ENCODE measurements at regions of chr2 and their contacts with region 1.

Region 1: GRCh38 chr2:21175895-21176646 is 52.3 kb downstream of the TDRD15 start:
- DNase-seq: peak in 1 of 2 experiments; percentile 25
- H3K4me3 ChIP-seq: no peak overlapping the region
- H3K4me3 Mint-ChIP-seq: peak overlapping the region; percentile 6
- H3K27ac Mint-ChIP-seq: no peak overlapping the region
- H3K4me1 ChIP-seq: peaks cover 8% of the 10 kb centered on the region
- H3K4me1 Mint-ChIP-seq: peaks cover 15% of the 10 kb centered on the region
- H3K27me3 ChIP-seq: no peaks in the 10 kb centered on the region
- H3K27me3 Mint-ChIP-seq: no peaks in the 10 kb centered on the region
- CTCF ChIP-seq: peak; percentile 12 to 66

Region 2: DNA sequence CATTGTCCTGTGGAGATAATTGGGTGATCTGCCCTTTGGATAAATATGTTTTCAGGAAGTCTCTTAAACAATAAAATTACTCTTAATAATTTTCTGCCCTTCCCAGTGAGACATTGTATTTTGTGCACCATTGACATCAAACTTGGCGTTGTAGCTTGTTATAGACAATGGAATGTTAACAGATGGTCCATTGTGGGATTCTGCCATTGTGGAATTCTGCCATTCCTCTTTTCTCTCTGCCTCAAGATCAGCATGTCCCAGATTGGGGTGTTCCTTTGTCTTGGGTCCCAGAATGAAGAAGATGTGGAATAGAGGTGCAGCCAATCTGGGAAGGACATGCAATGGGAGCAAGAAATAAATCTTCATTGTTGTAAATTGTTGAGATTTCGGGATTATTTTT is 338.1 kb before region 1 on chr2:
- CTCF ChIA-PET with region 1: no interaction called
- POLR2A ChIA-PET with region 1: no interaction called
- intact Hi-C with region 1: no loop called
- DNase-seq: no peak
- H3K4me3 ChIP-seq: no peak overlapping the region
- H3K4me3 Mint-ChIP-seq: no peak overlapping the region
- H3K27ac Mint-ChIP-seq: no peak overlapping the region
- H3K4me1 ChIP-seq: no peaks in the 10 kb centered on the region
- H3K4me1 Mint-ChIP-seq: no peaks in the 10 kb centered on the region
- H3K27me3 ChIP-seq: no peaks in the 10 kb centered on the region
- H3K27me3 Mint-ChIP-seq: peaks cover 19% of the 10 kb centered on the region
- CTCF ChIP-seq: no peak

Region 3: GRCh38 chr2:21203976-21204375 is 27.9 kb after region 1 on chr2:
- CTCF ChIA-PET with region 1: no interaction called
- POLR2A ChIA-PET with region 1: no interaction called
- intact Hi-C with region 1: no loop called
- DNase-seq: no peak
- H3K4me3 ChIP-seq: no peak overlapping the region
- H3K4me3 Mint-ChIP-seq: no peak overlapping the region
- H3K27ac Mint-ChIP-seq: no peak overlapping the region
- H3K4me1 ChIP-seq: no peaks in the 10 kb centered on the region
- H3K4me1 Mint-ChIP-seq: no peaks in the 10 kb centered on the region
- H3K27me3 ChIP-seq: no peaks in the 10 kb centered on the region
- H3K27me3 Mint-ChIP-seq: no peaks in the 10 kb centered on the region
- CTCF ChIP-seq: no peak

Region 4: DNA sequence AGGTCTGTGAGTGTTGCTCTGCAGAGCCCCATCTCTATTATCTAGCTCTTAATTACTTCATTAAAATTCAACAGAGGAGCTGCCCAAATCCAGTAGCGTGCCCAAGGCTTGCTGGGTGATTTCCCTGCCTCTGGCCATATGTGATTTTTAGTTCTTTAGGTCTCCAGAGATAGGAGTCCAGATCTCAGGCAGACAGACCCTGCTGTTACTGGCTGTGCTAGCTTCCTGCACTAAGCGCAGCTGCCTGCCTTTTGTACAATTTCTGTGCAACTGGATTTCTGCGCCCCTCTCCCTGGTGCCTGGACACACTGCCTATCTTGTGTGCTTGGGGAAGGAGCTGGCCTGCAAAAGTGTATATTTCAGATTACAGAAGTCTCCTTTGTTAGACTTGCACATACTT is 84.2 kb after region 1 on chr2:
- CTCF ChIA-PET with region 1: no interaction called
- POLR2A ChIA-PET with region 1: no interaction called
- intact Hi-C with region 1: no loop called
- DNase-seq: no peak
- H3K4me3 ChIP-seq: no peak overlapping the region
- H3K4me3 Mint-ChIP-seq: no peak overlapping the region
- H3K27ac Mint-ChIP-seq: no peak overlapping the region
- H3K4me1 ChIP-seq: peaks cover 15% of the 10 kb centered on the region
- H3K4me1 Mint-ChIP-seq: peaks cover 30% of the 10 kb centered on the region
- H3K27me3 ChIP-seq: no peaks in the 10 kb centered on the region
- H3K27me3 Mint-ChIP-seq: no peaks in the 10 kb centered on the region
- CTCF ChIP-seq: no peak

Region 5: DNA sequence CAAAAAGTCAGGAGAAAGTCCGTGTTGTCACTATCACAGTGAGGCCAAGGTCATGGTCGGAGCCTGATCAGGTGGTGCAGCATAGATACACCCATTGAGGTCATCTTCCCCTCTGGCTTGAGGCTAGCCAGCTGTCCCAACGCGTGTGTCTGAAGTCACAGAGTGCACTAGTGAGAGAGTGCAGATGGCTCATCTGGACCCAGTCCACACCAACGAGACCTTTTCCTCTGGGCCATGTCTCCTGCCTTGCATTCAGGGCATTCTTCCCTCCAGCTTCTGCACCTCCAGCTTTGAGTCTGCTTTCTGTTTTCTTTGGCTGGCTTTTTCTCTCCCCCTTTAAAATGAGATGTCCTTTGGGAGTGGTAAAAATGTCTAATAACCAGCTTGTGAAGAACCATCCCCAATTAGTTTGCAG is 94.6 kb after region 1 on chr2:
- CTCF ChIA-PET with region 1: interaction called, 3 read pairs
- POLR2A ChIA-PET with region 1: no interaction called
- intact Hi-C with region 1: loop called (anchors 2 kb)
- DNase-seq: peak; percentile 25 to 44
- H3K4me3 ChIP-seq: no peak overlapping the region
- H3K4me3 Mint-ChIP-seq: peak overlapping the region; percentile 44
- H3K27ac Mint-ChIP-seq: peak overlapping the region; percentile 92
- H3K4me1 ChIP-seq: peaks cover 53% of the 10 kb centered on the region
- H3K4me1 Mint-ChIP-seq: peaks cover 63% of the 10 kb centered on the region
- H3K27me3 ChIP-seq: no peaks in the 10 kb centered on the region
- H3K27me3 Mint-ChIP-seq: no peaks in the 10 kb centered on the region
- CTCF ChIP-seq: no peak

Region 6: DNA sequence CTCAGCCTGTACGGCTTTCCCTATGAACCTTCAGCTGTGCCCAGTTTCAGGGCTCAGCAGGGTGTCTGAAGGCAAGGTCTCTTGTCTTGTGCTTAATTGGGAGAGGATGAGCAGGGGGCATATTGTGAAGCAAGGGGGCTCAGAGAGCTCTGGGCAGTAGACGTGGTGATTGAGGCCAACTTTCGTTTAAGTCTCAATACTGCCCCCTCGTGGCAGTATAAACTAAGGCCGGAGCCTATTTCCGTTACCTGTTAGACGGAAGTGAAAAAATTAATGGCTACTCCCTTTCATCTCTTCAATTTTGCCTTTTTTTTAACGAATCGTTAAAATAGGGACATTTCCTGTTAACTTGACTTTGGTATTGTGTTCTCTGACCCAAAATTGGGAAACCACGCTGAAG is 141.1 kb after region 1 on chr2:
- CTCF ChIA-PET with region 1: interaction called, 21 read pairs
- POLR2A ChIA-PET with region 1: no interaction called
- intact Hi-C with region 1: loop called (anchors 1 kb)
- DNase-seq: peak; percentile 48 to 70
- H3K4me3 ChIP-seq: no peak overlapping the region
- H3K4me3 Mint-ChIP-seq: no peak overlapping the region
- H3K27ac Mint-ChIP-seq: peak overlapping the region; percentile 57
- H3K4me1 ChIP-seq: peaks cover 14% of the 10 kb centered on the region
- H3K4me1 Mint-ChIP-seq: peaks cover 10% of the 10 kb centered on the region
- H3K27me3 ChIP-seq: no peaks in the 10 kb centered on the region
- H3K27me3 Mint-ChIP-seq: no peaks in the 10 kb centered on the region
- CTCF ChIP-seq: peak; percentile 66 to 73

Region 7: DNA sequence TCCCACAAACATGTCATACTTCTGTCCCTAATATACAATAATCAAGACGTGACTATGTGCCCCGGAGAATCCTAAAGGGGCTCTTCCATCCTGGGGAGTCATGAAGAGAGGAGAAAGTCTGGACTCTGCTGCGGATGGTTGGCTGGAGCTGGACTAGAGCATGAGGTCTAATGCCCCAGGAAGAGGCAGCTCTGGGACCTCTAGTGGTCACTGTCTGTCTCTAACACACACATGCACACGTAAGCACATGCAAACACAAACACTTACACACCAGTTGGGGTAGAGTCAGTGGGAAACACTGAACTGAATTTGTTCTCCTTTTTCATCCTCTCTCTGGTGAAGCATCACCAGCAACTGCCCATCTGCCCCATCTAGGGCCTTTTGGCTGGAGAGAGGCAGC is 219.3 kb after region 1 on chr2:
- CTCF ChIA-PET with region 1: interaction called, 5 read pairs
- POLR2A ChIA-PET with region 1: no interaction called
- intact Hi-C with region 1: loop called (anchors 1 kb)
- DNase-seq: peak; percentile 32 to 44
- H3K4me3 ChIP-seq: no peak overlapping the region
- H3K4me3 Mint-ChIP-seq: no peak overlapping the region
- H3K27ac Mint-ChIP-seq: no peak overlapping the region
- H3K4me1 ChIP-seq: no peaks in the 10 kb centered on the region
- H3K4me1 Mint-ChIP-seq: peaks cover 7% of the 10 kb centered on the region
- H3K27me3 ChIP-seq: no peaks in the 10 kb centered on the region
- H3K27me3 Mint-ChIP-seq: peaks cover 2% of the 10 kb centered on the region
- CTCF ChIP-seq: peak; percentile 43 to 65